Colonic mucosa (tissue), 4 donors: ENCODE measurements at regions of chr2 and their contacts with region 1.

Region 1: GRCh38 chr2:236352761-236353593 is 88.8 kb upstream of the ASB18 start:
- DNase-seq: no peak
- H3K4me3 ChIP-seq: no peak overlapping the region
- H3K27ac ChIP-seq: no peak overlapping the region
- H3K4me1 ChIP-seq: no peaks in the 10 kb centered on the region
- H3K27me3 ChIP-seq: no peaks in the 10 kb centered on the region
- CTCF ChIP-seq: peak; percentile 73

Region 2: DNA sequence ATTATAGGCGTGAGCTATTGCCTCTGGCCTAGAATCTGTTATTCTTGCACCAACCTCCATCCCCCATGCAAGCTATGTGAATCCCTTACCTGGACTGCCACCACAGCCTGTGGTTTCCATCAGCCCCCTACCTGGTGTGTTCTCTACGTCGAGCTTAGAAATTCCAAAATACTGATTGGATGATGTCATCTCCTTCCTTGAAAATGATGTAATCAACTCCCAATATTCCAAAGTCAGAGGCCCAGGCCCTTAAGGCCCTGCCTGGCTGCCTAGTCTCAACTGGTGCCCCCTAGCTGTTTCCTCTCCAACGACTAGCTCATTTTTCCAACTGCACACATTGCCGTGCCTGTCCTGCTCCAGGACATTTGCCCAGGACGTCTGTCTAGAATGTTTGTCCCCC is 143.4 kb before region 1 on chr2:
- intact Hi-C with region 1: no loop called
- DNase-seq: no peak
- H3K4me3 ChIP-seq: no peak overlapping the region
- H3K27ac ChIP-seq: no peak overlapping the region
- H3K4me1 ChIP-seq: no peaks in the 10 kb centered on the region
- H3K27me3 ChIP-seq: peaks cover 4% of the 10 kb centered on the region
- CTCF ChIP-seq: no peak

Region 3: GRCh38 chr2:237072067-237072931 is 719.3 kb after region 1 on chr2:
- intact Hi-C with region 1: loop called (anchors 5 kb)
- DNase-seq: peak; percentile 77
- H3K4me3 ChIP-seq: no peak overlapping the region
- H3K27ac ChIP-seq: no peak overlapping the region
- H3K4me1 ChIP-seq: no peaks in the 10 kb centered on the region
- H3K27me3 ChIP-seq: no peaks in the 10 kb centered on the region
- CTCF ChIP-seq: peak; percentile 94